ENCODE measurements at regions of chr2 and their contacts with region 1.

Region 1: GRCh38 chr2:125041846-125042245 is 1016.8 kb downstream of the CNTNAP5 start:
- DNase-seq: peak; percentile 70
- H3K4me3 Mint-ChIP-seq: no peak overlapping the region
- H3K27ac Mint-ChIP-seq: no peak overlapping the region
- H3K4me1 Mint-ChIP-seq: peaks cover 11% of the 10 kb centered on the region
- H3K27me3 Mint-ChIP-seq: peaks cover 19% of the 10 kb centered on the region
- CTCF ChIP-seq: no peak

Region 2: GRCh38 chr2:124983595-124983994 is 58.3 kb before region 1 on chr2:
- CTCF ChIA-PET with region 1: no interaction called
- POLR2A ChIA-PET with region 1: no interaction called
- intact Hi-C with region 1: loop called (anchors 1 kb)
- DNase-seq: peak; percentile 84
- H3K4me3 Mint-ChIP-seq: no peak overlapping the region
- H3K27ac Mint-ChIP-seq: no peak overlapping the region
- H3K4me1 Mint-ChIP-seq: peaks cover 11% of the 10 kb centered on the region
- H3K27me3 Mint-ChIP-seq: no peaks in the 10 kb centered on the region
- CTCF ChIP-seq: no peak

Measured in MCF 10A (cell line).